ENCODE measurements at regions of chr17 and their contacts with region 1.

Region 1: DNA sequence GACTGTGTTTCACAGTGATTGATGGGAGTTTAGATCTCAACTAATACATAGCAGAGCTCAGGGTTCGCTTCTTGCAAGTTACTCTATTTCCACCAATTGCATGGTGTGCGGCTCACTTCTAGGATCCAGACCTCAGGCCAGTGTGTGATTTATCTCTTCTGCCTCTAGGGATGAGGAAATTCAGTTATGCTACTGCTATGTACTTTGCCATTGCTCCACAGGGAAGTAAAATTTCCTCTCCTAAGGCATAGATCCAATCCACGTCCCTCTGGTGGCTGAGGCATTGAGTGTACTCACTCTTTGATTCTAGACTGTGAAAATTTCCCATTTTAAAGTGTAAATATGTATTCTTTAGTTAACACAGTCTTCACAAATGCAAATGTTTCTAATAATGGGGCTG is 214.1 kb downstream of the HS3ST3B1 start:
- DNase-seq: no peak
- H3K4me3 ChIP-seq: no peak overlapping the region
- H3K27ac ChIP-seq: no peak overlapping the region
- H3K4me1 ChIP-seq: no peaks in the 10 kb centered on the region
- H3K27me3 ChIP-seq: no peaks in the 10 kb centered on the region
- CTCF ChIP-seq: no peak

Region 2: DNA sequence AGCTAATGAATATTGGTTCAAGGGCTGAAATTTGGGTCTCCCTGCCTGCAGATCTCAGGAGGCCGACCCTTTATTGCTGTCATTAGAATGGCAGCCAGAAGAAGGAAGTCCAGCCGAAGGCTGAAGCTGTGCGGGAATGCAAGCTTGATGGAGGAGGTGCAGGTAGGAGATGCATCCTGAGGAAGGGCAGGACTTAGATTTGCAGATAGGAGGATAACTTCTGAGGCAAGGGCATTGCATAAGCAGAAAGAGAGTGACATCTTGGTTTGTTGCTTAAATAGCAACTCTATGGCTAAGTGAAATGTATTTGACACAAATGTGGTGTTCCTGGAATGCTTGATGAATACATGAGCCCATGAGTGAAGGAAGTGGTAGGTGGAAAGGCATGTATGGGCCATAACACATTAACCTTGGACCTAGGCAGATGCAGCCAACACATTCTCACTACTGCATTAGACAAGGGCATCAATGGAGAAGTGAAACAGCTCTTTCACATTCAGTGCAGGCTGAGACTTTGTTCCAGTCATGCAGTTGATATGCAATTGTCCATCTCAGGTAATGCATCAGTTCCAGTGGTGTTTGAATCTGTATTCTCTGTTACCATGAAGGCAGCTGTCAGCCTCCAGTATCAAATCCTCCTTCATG is 80.6 kb before region 1 on chr17:
- CTCF ChIA-PET with region 1: no interaction called
- dilution Hi-C with region 1: no loop called
- in situ Hi-C with region 1: no loop called
- intact Hi-C with region 1: no loop called
- DNase-seq: peak; percentile 2
- H3K4me3 ChIP-seq: no peak overlapping the region
- H3K27ac ChIP-seq: no peak overlapping the region
- H3K4me1 ChIP-seq: no peaks in the 10 kb centered on the region
- H3K27me3 ChIP-seq: no peaks in the 10 kb centered on the region
- CTCF ChIP-seq: no peak

Region 3: DNA sequence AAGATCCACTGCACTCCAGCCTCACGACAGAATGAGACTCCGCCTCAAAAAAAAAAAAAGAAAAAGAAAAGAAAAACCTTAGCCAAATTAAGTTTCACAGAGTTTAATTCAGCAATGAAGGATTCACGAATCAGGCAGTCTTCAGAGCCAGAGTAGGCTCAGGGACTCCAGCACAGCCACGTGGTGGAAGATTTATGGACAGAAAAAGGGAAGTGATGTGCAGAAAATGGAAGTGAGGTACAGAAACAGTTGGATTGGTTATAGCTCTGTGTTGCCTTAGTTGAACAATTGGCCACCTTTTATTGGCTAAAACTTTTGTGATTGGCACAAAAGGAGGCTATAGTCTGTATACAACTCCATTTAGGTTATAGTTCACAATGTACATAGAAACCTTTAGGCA is 42.5 kb after region 1 on chr17:
- CTCF ChIA-PET with region 1: no interaction called
- dilution Hi-C with region 1: loop called (anchors 5 kb)
- in situ Hi-C with region 1: no loop called
- intact Hi-C with region 1: no loop called
- DNase-seq: no peak
- H3K4me3 ChIP-seq: no peak overlapping the region
- H3K27ac ChIP-seq: no peak overlapping the region
- H3K4me1 ChIP-seq: no peaks in the 10 kb centered on the region
- H3K27me3 ChIP-seq: no peaks in the 10 kb centered on the region
- CTCF ChIP-seq: no peak